Activated CD4-positive, alpha-beta T cell treated with anti-CD3 and anti-CD28 coated beads for 36 hours (primary cell): ENCODE measurements at regions of chr4 and their contacts with region 1.

Region 1: DNA sequence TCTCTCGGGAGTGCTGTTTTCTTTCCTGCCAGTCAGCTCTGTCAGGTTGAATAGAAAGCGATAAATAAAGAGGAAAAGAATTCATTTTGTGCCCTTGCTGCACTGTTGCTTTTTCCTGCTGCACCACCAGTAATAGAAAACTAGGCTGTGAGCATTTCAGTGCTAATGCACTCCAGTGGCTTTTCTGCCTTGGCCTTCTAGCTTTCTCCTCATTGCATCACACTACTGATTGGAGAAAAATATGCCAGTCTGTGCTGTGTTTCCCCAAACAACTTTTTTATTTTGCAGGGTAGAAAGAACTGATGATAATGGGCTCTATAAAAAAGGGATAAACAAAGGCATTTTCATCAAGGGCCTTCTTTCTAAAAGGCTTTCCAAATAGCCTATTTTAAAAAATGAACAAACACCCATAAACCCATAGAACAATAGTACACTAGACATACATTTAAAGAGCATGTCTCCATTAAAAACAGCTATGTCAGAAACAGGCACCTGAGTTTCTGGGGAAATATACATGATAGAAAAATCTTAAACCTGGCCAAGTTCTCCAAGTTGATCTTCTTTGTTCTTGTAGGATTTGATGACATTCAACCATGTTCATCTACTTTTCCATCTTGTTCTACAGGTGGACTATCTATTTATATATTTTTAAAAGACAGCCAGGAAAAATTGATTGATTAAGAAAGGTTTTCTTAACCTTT is 86.3 kb downstream of the GPRIN3 start:
- DNase-seq: no peak
- ATAC-seq: no peak
- H3K4me3 Mint-ChIP-seq: no peak overlapping the region
- H3K27ac Mint-ChIP-seq: no peak overlapping the region
- H3K4me1 Mint-ChIP-seq: peaks cover 10% of the 10 kb centered on the region
- H3K27me3 Mint-ChIP-seq: no peaks in the 10 kb centered on the region

Region 2: DNA sequence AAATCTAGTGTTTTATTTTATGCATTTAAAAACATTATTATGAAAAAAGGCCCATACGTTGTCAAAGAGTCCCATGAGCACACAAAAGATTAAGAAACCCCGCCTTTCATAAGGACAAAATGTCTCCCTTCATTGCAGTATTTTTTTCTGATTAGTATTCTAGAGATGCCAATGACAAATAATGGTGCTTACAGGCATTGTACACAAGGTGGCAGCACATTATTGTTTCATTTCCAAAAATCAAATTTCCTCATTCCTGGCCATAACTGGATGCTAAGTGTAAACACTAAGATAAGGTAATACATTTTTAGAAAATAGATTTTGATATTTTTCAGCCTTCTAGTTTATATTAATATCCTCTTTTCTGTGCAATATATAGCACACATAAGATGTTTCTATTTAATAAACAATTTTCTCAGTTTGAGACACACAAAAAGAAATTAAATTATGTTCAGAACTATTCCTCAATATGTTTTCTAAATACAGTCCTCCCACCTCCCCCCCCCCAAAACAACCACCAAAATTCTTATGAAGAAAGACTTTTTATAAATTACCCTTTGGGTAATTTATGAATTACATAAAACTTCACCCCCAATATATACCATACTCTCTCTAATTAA is 62.3 kb before region 1 on chr4:
- CTCF ChIA-PET with region 1: interaction called, 10 read pairs
- POLR2A ChIA-PET with region 1: no interaction called
- intact Hi-C with region 1: loop called (anchors 2 to 5 kb)
- DNase-seq: no peak
- ATAC-seq: no peak
- H3K4me3 Mint-ChIP-seq: no peak overlapping the region
- H3K27ac Mint-ChIP-seq: no peak overlapping the region
- H3K4me1 Mint-ChIP-seq: no peaks in the 10 kb centered on the region
- H3K27me3 Mint-ChIP-seq: peaks cover 5% of the 10 kb centered on the region